ENCODE measurements at regions of chrX and their contacts with region 1.

Region 1: GRCh38 chrX:83469551-83469950 is 38.5 kb upstream of the POU3F4 start:
- DNase-seq: peak; percentile 21
- CTCF ChIP-seq: peak; percentile 38

Region 2: DNA sequence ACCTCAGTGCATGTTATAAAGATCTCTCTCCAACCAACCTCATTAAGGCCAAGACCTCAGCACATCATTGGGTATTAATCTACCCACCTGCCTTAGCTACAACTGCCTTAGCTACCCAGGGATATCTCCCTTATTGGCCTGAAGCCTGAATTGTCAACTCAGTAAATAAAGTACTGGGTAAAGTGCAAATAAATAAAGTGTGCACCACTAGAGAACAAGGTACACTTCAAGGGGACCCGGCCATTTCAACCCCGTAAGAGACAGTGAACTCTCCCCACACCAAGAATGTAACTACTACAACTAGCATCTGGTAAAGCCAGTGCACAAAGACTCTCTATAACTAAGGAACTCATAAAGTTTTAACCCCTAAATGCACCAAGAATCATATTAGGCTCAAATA is 23.2 kb before region 1 on chrX:
- CTCF ChIA-PET with region 1: no interaction called
- POLR2A ChIA-PET with region 1: no interaction called
- DNase-seq: no peak
- CTCF ChIP-seq: no peak

Region 3: DNA sequence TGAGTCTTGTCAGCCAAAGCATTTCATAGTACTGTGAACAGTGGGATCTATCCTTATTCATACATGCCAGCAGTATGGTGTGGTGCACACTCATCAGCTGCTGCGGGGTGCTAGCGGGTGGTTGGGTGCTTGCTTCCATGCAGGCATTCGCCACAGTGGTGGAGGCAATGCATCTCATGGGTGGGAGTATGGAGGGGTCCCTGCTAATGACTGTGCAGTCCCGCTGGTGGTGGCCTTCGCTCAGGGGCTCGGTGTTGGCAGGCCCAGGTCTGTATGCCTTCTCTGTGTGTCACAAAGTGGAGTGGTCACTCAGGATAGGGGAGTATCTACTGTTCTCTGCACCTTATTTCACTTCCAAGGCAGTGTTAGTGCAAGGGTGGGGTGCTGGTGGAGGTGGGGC is 161.1 kb after region 1 on chrX:
- CTCF ChIA-PET with region 1: interaction called, 20 read pairs
- POLR2A ChIA-PET with region 1: no interaction called
- DNase-seq: no peak
- CTCF ChIP-seq: no peak